Left colon (tissue), 2 donors: ENCODE measurements at regions of chr12 and their contacts with region 1.

Region 1: GRCh38 chr12:52879394-52880351 is 25.2 kb downstream of the KRT8 start:
- DNase-seq: peak; percentile 80 to 89
- ATAC-seq: peak; percentile 77

Region 2: GRCh38 chr12:52156736-52157565 is 722.7 kb before region 1 on chr12:
- intact Hi-C with region 1: loop called in 1 of 2 experiments (anchors 5 kb)
- DNase-seq: peak; percentile 62 to 82
- ATAC-seq: peak; percentile 51

Region 3: GRCh38 chr12:52372216-52373154 is 507.2 kb before region 1 on chr12:
- intact Hi-C with region 1: loop called in 1 of 2 experiments (anchors 5 kb)
- DNase-seq: peak; percentile 65 to 85
- ATAC-seq: peak; percentile 92

Region 4: GRCh38 chr12:52582971-52583456 is 296.7 kb before region 1 on chr12:
- intact Hi-C with region 1: loop called (anchors 5 to 10 kb)
- DNase-seq: peak in 1 of 2 donors; percentile 64
- ATAC-seq: peak; percentile 97

Region 5: GRCh38 chr12:52956987-52957386 is 77.3 kb after region 1 on chr12:
- intact Hi-C with region 1: no loop called
- DNase-seq: no peak
- ATAC-seq: no peak